Activated T-helper 1 cell treated with anti-CD3 and anti-CD28 coated beads, Interleukin-12 subunit alpha, Interleukin-12 subunit beta, Interleukin-2, Interleukin-4 antibody, amounts not matched to agents 30 ng/mL and 10 ng/mL and 1 ng/mL, durations not matched to agents 14 hours and 24 hours and 36 hours (primary cell): ENCODE measurements at regions of chr2 and their contacts with region 1.

Region 1: GRCh38 chr2:191165176-191165643 is 14.4 kb upstream of the STAT4 start:
- DNase-seq: no peak
- H3K4me3 Mint-ChIP-seq: no peak overlapping the region
- H3K27ac Mint-ChIP-seq: no peak overlapping the region
- H3K4me1 Mint-ChIP-seq: peaks cover 25% of the 10 kb centered on the region
- H3K27me3 Mint-ChIP-seq: peaks cover 2% of the 10 kb centered on the region

Region 2: GRCh38 chr2:191245046-191245868 is 80.0 kb after region 1 on chr2 and contains the start of gene MYO1B:
- intact Hi-C with region 1: loop called (anchors 2 kb)
- DNase-seq: peak; percentile 58
- H3K4me3 Mint-ChIP-seq: peak within 1 kb of the TSS; percentile 77
- H3K27ac Mint-ChIP-seq: peak within 1 kb of the TSS; percentile 49
- H3K4me1 Mint-ChIP-seq: peaks cover 23% of the 10 kb centered on the region
- H3K27me3 Mint-ChIP-seq: peaks cover 5% of the 10 kb centered on the region
- total RNA-seq, gene MYO1B: 13.2 and 15.2 TPM in 2 replicates

Region 3: GRCh38 chr2:191369036-191369435 is 203.8 kb after region 1 on chr2:
- intact Hi-C with region 1: loop called (anchors 2 kb)
- DNase-seq: no peak
- H3K4me3 Mint-ChIP-seq: no peak overlapping the region
- H3K27ac Mint-ChIP-seq: no peak overlapping the region
- H3K4me1 Mint-ChIP-seq: no peaks in the 10 kb centered on the region
- H3K27me3 Mint-ChIP-seq: no peaks in the 10 kb centered on the region

Region 4: DNA sequence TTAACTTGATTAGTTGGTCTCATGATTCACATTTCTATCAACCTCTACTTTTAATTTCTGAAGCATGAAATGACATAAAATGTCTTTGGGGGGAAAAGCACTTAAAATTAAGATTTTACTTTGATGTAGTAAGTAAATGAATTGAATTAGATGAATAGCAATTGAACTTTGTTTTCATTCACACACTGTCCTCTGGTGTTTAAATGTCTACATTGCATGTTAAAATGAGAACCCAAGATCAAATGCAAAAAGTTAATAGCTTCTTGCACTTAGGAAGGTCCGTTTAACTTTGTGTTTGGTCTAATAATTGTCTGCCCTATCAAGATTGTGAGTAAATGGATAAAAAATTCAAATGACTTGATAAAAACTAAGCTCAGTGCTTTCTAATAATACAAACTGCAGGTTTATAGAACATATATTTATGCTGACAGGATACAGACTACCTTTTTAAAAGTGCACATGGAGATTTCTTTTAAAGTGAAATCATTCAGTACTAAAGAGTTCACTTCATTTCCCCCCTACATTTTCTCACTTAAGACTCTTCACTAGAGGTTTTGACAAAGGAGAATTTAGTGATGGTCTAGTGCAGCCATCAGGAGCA is 356.5 kb after region 1 on chr2:
- intact Hi-C with region 1: loop called (anchors 1 kb)
- DNase-seq: no peak
- H3K4me3 Mint-ChIP-seq: no peak overlapping the region
- H3K27ac Mint-ChIP-seq: no peak overlapping the region
- H3K4me1 Mint-ChIP-seq: no peaks in the 10 kb centered on the region
- H3K27me3 Mint-ChIP-seq: peaks cover 5% of the 10 kb centered on the region

Region 5: DNA sequence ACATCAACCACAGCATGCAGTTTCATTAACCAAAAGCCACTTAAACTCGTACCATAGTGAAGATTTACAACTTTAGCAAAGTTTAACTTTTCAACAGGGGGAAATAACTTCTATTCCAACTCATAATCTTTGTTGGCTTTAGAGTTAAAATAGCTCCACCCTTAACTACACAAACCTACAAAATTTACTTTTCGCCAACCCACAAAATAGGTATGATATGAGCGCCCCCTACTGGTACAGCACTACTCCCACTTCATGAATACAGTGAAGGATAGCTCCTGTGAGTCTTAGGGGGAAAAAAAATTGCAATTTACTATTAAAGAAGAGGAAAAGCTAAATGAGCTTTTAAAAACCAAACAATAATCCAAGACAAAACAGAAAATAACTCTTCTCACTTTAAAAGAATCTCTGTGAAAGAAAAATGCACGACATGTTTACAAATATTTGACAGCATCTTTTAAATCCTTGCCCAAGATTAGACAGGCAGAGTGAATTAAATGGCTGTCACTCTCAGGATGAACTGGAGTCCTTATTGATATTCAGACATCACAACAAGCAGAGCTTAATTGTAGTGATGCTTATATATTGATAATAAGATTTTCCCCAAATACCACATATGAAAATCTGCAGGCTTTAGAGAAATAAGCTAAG is 997.3 kb after region 1 on chr2:
- intact Hi-C with region 1: loop called (anchors 1 kb)
- DNase-seq: peak; percentile 37
- H3K4me3 Mint-ChIP-seq: no peak overlapping the region
- H3K27ac Mint-ChIP-seq: no peak overlapping the region
- H3K4me1 Mint-ChIP-seq: peaks cover 8% of the 10 kb centered on the region
- H3K27me3 Mint-ChIP-seq: peaks cover 13% of the 10 kb centered on the region